CD8-positive, alpha-beta T cell (primary cell): ENCODE measurements at regions of chr1 and their contacts with region 1.

Region 1: DNA sequence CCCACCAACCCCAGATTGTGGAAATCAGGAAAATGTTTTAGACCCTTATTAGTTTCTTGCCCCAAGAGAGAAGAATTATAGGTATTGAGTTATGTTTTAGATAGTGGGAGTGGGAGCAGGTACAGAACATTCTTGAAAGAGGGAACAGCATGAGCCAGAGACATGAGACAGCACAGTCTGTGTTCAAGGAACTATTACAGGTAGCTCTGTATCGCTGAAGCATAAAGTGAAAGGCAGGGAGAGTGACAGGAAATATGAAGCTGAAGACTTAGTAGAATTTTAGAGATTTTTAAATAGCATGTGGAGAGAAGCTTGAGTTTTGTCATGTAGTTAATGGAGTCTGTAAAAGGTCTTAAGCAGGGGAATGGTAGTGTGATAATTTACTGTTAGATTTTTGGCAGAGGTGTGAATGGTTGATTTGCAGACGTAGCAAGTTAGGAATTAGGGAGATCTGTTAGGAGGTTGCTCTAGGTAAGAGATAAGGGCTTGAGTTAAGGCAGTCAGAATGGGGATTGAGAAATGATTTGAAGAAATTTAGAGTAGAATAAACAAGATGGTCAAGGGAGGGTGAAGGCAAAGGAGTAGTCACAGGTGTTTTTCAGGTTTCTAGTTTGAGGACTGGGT is 11.6 kb downstream of the SUCO start:
- DNase-seq: no peak
- ATAC-seq: no peak
- H3K4me3 ChIP-seq: no peak overlapping the region
- H3K4me3 Mint-ChIP-seq: no peak overlapping the region
- H3K27ac ChIP-seq: no peak overlapping the region
- H3K27ac Mint-ChIP-seq: no peak overlapping the region
- H3K4me1 ChIP-seq: peaks cover 33% of the 10 kb centered on the region
- H3K4me1 Mint-ChIP-seq: peaks cover 45% of the 10 kb centered on the region
- H3K27me3 ChIP-seq: no peaks in the 10 kb centered on the region
- H3K27me3 Mint-ChIP-seq: no peaks in the 10 kb centered on the region
- CTCF ChIP-seq: no peak

Region 2: GRCh38 chr1:170562646-170563338 is 1981.8 kb before region 1 on chr1:
- CTCF ChIA-PET with region 1: no interaction called
- POLR2A ChIA-PET with region 1: no interaction called
- intact Hi-C with region 1: no loop called
- DNase-seq: peak in 4 of 9 experiments; percentile 2 to 38 (median 12)
- ATAC-seq: peak; percentile 23
- H3K4me3 ChIP-seq: no peak overlapping the region
- H3K4me3 Mint-ChIP-seq: no peak overlapping the region
- H3K27ac ChIP-seq: no peak overlapping the region
- H3K27ac Mint-ChIP-seq: no peak overlapping the region
- H3K4me1 ChIP-seq: no peaks in the 10 kb centered on the region
- H3K4me1 Mint-ChIP-seq: peaks cover 4% of the 10 kb centered on the region
- H3K27me3 ChIP-seq: no peaks in the 10 kb centered on the region
- H3K27me3 Mint-ChIP-seq: peaks cover 8% of the 10 kb centered on the region
- CTCF ChIP-seq: no peak

Region 3: DNA sequence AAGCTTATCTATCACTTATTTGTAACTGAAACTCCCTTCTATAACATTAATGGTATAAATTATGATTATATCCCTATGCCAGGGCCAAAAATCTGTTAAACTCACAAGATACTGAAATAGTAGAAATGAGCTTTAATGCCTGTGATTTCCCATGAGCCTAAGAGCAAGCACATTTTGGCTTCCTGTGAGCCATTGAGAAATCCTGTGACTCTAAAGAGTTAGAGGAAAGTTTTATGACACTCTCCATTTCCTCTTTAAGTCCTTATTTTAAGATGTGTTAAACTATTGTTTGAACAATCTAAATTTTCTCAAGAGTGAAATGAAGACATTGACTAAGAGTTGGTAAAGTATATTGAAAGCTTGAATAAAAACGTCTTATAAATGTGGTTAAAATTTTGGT is 34.0 kb after region 1 on chr1:
- CTCF ChIA-PET with region 1: no interaction called
- POLR2A ChIA-PET with region 1: no interaction called
- intact Hi-C with region 1: loop called in 1 of 2 experiments (anchors 5 kb)
- DNase-seq: no peak
- ATAC-seq: no peak
- H3K4me3 ChIP-seq: no peak overlapping the region
- H3K4me3 Mint-ChIP-seq: no peak overlapping the region
- H3K27ac ChIP-seq: no peak overlapping the region
- H3K27ac Mint-ChIP-seq: no peak overlapping the region
- H3K4me1 ChIP-seq: no peaks in the 10 kb centered on the region
- H3K4me1 Mint-ChIP-seq: peaks cover 7% of the 10 kb centered on the region
- H3K27me3 ChIP-seq: no peaks in the 10 kb centered on the region
- H3K27me3 Mint-ChIP-seq: no peaks in the 10 kb centered on the region
- CTCF ChIP-seq: no peak